Mammary epithelial cell (primary cell): ENCODE measurements at regions of chr4 and their contacts with region 1.

Region 1: DNA sequence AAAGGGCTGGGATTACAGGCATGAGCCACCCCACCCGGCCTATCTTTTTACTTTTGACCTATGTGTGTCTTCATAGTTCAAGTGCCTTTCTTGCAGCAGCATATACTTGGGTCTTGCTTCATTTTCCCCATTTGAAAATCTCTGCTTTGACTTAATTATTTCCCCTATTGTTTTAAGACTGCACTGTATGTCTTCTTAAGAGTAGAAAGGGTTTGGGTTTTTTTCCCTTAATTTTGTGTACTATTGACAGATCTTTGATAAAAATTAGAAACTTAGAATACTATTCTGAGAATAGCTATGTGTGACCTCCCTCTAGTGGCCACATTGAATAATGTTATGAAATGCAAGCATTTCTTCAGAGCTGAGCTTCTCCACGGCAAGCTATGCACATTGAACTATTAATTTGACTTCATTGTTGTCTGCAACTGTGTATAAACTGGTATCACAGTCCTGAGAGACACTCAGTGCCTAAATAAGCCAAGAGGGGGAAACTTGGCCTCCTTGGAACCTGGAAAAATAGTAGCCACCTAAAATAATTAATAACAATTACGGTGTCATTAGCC is 8.7 kb upstream of the SLC25A4 start:
- DNase-seq: peak; percentile 35
- H3K4me3 ChIP-seq: no peak overlapping the region
- H3K27ac ChIP-seq: no peak overlapping the region
- H3K4me1 ChIP-seq: no peaks in the 10 kb centered on the region
- H3K27me3 ChIP-seq: no peaks in the 10 kb centered on the region
- CTCF ChIP-seq: peak; percentile 63 to 76

Region 2: DNA sequence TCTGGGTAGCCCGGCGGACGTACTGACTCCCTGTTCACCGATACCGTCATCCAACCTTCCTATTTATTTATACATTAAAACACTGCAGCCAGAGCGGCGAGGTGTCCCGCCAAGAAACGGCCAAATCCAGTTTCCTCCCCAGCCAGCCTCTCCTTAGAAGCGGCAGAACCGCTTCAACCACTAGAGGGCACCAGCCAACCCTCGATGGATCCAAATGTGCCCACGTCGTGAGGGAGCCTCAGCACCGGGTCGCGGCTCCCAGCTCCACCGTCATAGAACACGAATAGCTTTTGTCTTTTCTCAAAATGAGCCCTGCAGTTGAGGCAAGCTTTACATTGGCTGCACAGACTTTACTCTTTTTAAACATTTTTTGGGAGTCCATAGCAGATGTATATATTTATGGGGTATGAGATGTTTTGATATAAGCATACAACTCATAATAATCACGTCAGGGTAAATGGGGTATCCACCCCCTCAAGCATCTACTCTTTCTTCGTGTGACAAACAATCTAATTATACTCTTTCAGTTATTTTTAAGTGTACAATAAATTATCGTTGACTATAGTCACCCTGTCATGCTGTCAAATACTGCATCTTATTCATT is 129.1 kb before region 1 on chr4:
- CTCF ChIA-PET with region 1: no interaction called
- dilution Hi-C with region 1: no loop called
- in situ Hi-C with region 1: loop called in 1 of 2 experiments (anchors 10 kb)
- intact Hi-C with region 1: loop called (anchors 1 kb)
- DNase-seq: peak; percentile 63
- H3K4me3 ChIP-seq: peak overlapping the region in 1 of 3 experiments; percentile 27
- H3K27ac ChIP-seq: no peak overlapping the region
- H3K4me1 ChIP-seq: peaks cover 5% of the 10 kb centered on the region
- H3K27me3 ChIP-seq: peaks cover 4% of the 10 kb centered on the region
- CTCF ChIP-seq: peak; percentile 84 to 95

Region 3: DNA sequence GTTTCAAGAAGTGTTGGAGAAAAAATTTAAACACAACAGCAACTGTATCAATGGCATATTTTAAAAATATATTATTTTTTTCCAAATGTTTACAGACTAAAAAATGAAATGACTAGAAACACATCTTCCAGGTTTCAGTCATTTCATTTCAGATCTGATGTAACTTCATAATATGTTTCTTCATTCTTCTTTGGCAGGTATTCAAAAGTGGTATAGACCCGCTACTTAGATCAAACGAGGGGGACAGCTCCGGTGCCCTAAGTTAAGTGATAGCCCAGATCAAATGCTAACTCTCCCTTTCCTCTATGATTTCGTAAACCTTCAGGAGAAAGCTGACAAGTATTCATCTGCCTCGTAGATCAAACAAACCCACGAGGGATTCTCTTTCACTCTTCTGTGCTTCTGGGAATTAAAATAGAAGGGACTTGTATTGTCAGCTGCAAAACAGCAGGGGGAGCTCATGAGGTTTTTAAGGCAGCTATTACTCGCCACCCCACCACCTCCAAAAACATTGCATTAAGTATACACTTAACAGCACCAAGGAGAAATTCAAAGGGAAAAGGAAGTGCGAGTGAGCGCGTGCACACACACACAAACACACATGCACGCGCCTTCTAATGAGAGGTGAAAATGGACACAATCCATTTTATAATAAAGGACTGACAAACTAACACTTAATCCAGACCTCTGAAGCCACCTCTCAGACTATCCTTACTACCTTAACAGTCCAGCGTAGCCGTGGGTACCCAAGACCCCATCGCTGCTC is 94.7 kb before region 1 on chr4:
- CTCF ChIA-PET with region 1: interaction called, 6 read pairs
- dilution Hi-C with region 1: no loop called
- in situ Hi-C with region 1: loop called in 1 of 2 experiments (anchors 10 kb)
- intact Hi-C with region 1: loop called (anchors 1 kb)
- DNase-seq: peak; percentile 35
- H3K4me3 ChIP-seq: peak overlapping the region; percentile 31 to 42 (median 32)
- H3K27ac ChIP-seq: no peak overlapping the region
- H3K4me1 ChIP-seq: no peaks in the 10 kb centered on the region
- H3K27me3 ChIP-seq: no peaks in the 10 kb centered on the region
- CTCF ChIP-seq: peak; percentile 71 to 78

Region 4: DNA sequence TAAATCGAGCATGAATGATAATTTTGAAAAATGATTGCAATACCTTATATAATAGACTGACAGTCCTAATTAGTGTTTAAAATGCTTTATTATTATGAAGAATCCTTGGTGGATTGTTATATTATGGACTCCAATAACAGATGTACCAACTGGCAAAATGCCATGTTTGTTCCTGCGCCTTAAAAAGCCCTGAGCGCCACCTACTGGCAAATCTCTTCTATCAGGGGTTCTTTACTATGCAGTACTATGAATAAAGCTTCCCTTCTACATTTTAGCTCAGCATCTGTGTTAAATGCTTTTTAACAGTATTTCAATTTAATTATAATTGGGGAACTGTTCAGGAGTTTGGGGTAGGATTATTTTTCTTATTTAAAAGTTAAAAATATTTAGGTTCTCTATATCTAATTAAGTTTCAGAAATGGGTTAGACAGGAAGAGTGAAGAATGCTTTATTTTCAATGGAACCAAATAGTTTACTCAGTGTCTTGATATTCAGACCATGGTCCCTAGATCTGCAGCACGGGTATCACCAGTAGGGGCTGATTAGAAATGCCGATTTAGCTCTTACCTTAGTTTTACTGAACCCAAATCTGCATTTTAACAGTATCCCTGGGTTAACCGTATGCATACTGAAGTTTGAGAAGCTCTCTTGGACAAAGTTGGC is 49.4 kb after region 1 on chr4:
- CTCF ChIA-PET with region 1: no interaction called
- dilution Hi-C with region 1: no loop called
- in situ Hi-C with region 1: no loop called
- intact Hi-C with region 1: loop called (anchors 2 kb)
- DNase-seq: peak; percentile 66
- H3K4me3 ChIP-seq: no peak overlapping the region
- H3K27ac ChIP-seq: no peak overlapping the region
- H3K4me1 ChIP-seq: no peaks in the 10 kb centered on the region
- H3K27me3 ChIP-seq: no peaks in the 10 kb centered on the region
- CTCF ChIP-seq: peak; percentile 80 to 85